ENCODE measurements at regions of chr18 and their contacts with region 1.

Region 1: GRCh38 chr18:74196220-74197119 is 48.1 kb downstream of the TIMM21 start:
- DNase-seq: peak; percentile 49
- H3K4me3 Mint-ChIP-seq: peak overlapping the region; percentile 66
- H3K27ac Mint-ChIP-seq: peak overlapping the region; percentile 67
- H3K4me1 Mint-ChIP-seq: peaks cover 24% of the 10 kb centered on the region
- H3K27me3 Mint-ChIP-seq: peaks cover 16% of the 10 kb centered on the region
- CTCF ChIP-seq: peak; percentile 88

Region 2: GRCh38 chr18:74171910-74172606 is 24.4 kb before region 1 on chr18:
- CTCF ChIA-PET with region 1: no interaction called
- intact Hi-C with region 1: no loop called
- DNase-seq: no peak
- H3K4me3 Mint-ChIP-seq: peak overlapping the region; percentile 70
- H3K27ac Mint-ChIP-seq: no peak overlapping the region
- H3K4me1 Mint-ChIP-seq: peaks cover 27% of the 10 kb centered on the region
- H3K27me3 Mint-ChIP-seq: peaks cover 82% of the 10 kb centered on the region
- CTCF ChIP-seq: no peak

Region 3: GRCh38 chr18:74234326-74235171 is 38.1 kb after region 1 on chr18:
- CTCF ChIA-PET with region 1: interaction called, 5 read pairs
- intact Hi-C with region 1: loop called (anchors 2 kb)
- DNase-seq: peak; percentile 62
- H3K4me3 Mint-ChIP-seq: peak overlapping the region; percentile 31
- H3K27ac Mint-ChIP-seq: peak overlapping the region; percentile 82
- H3K4me1 Mint-ChIP-seq: peaks cover 34% of the 10 kb centered on the region
- H3K27me3 Mint-ChIP-seq: no peaks in the 10 kb centered on the region
- CTCF ChIP-seq: no peak

Region 4: GRCh38 chr18:74291771-74292540 is 95.5 kb after region 1 on chr18 and contains the start of gene CYB5A:
- CTCF ChIA-PET with region 1: interaction called, 3 read pairs
- intact Hi-C with region 1: loop called (anchors 2 kb)
- DNase-seq: peak; percentile 98
- H3K4me3 Mint-ChIP-seq: peak within 1 kb of the TSS; percentile 100
- H3K27ac Mint-ChIP-seq: peak within 1 kb of the TSS; percentile 81
- H3K4me1 Mint-ChIP-seq: peaks cover 22% of the 10 kb centered on the region
- H3K27me3 Mint-ChIP-seq: no peaks in the 10 kb centered on the region
- CTCF ChIP-seq: no peak
- total RNA-seq, gene CYB5A: 143 and 169 TPM in 2 replicates

Region 5: DNA sequence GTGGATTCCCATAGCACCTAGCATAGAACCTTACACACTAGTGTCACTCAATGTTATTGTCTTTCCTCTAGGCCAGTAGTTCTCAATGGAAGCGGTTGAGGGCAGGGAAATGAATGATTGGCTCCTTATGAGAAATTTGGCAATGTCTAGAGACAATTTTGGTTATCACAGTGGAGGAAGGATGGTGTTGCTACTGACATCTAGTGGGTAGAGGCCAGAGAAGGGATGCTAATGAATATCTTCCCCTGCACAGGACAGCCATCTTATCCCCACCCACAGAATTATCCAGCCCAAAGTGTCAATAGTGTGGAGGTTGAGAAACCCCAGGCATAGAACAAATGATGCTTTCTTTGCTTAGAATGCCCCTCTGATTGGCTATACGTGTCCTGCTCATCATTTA is 134.9 kb after region 1 on chr18:
- CTCF ChIA-PET with region 1: no interaction called
- intact Hi-C with region 1: loop called (anchors 1 kb)
- DNase-seq: peak; percentile 24
- H3K4me3 Mint-ChIP-seq: no peak overlapping the region
- H3K27ac Mint-ChIP-seq: no peak overlapping the region
- H3K4me1 Mint-ChIP-seq: no peaks in the 10 kb centered on the region
- H3K27me3 Mint-ChIP-seq: no peaks in the 10 kb centered on the region
- CTCF ChIP-seq: peak; percentile 29

Region 6: DNA sequence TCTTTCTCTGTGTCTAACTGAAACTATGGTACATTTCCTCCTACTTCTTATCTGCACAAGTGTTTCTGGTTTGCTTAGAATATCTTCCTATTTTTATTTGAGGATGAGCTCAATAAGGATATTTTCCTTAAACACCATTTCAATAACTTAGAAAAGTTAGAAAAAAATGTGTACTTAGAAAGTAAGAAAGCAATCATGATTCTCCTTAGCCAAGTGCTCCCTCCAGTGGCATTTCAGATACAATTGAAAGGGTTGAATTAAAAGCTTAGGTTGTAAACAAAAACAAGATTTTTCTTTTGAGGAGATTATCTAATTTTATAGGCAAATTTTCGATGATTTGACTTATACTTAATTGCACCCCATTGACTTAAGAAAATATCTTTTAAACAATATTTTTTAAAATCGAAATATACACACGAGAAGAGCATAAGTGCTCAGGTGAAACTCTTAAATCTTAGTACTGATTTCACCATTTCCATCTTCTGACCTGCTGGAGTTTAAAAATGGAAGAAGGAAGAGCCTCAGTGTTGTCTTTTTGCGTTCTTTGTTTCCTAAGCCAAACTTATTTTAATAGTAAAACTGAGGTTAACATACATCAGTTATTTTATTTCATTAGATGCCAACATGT is 146.1 kb after region 1 on chr18:
- CTCF ChIA-PET with region 1: interaction called, 21 read pairs
- intact Hi-C with region 1: loop called (anchors 1 kb)
- DNase-seq: peak; percentile 46
- H3K4me3 Mint-ChIP-seq: no peak overlapping the region
- H3K27ac Mint-ChIP-seq: peak overlapping the region; percentile 7
- H3K4me1 Mint-ChIP-seq: no peaks in the 10 kb centered on the region
- H3K27me3 Mint-ChIP-seq: no peaks in the 10 kb centered on the region
- CTCF ChIP-seq: peak; percentile 48

Region 7: DNA sequence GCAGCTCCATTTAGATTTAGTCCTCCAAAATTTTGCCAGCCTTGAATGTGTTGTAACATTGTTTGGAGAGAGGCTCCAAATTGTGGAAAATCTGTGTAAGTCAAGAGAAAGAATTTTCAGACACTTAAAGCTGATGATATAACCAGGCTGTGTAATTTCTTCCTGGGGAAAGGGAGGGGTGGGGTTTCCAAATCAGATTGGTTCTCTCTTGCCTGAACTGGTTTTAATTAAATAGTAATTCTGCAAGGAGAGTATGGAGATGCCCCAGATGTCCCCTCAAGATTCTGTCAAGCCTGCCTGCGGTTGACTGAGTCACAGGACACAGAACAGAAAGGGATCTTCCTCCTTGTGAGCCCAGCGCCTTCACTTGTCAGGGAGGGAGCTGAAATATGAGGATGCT is 173.6 kb after region 1 on chr18:
- CTCF ChIA-PET with region 1: no interaction called
- intact Hi-C with region 1: no loop called
- DNase-seq: no peak
- H3K4me3 Mint-ChIP-seq: no peak overlapping the region
- H3K27ac Mint-ChIP-seq: no peak overlapping the region
- H3K4me1 Mint-ChIP-seq: peaks cover 9% of the 10 kb centered on the region
- H3K27me3 Mint-ChIP-seq: peaks cover 16% of the 10 kb centered on the region
- CTCF ChIP-seq: no peak

Region 8: GRCh38 chr18:74493689-74494088 is 297.2 kb after region 1 on chr18:
- CTCF ChIA-PET with region 1: no interaction called
- intact Hi-C with region 1: loop called (anchors 5 kb)
- DNase-seq: peak; percentile 61
- H3K4me3 Mint-ChIP-seq: no peak overlapping the region
- H3K27ac Mint-ChIP-seq: no peak overlapping the region
- H3K4me1 Mint-ChIP-seq: peaks cover 17% of the 10 kb centered on the region
- H3K27me3 Mint-ChIP-seq: peaks cover 11% of the 10 kb centered on the region
- CTCF ChIP-seq: peak; percentile 63

Region 9: DNA sequence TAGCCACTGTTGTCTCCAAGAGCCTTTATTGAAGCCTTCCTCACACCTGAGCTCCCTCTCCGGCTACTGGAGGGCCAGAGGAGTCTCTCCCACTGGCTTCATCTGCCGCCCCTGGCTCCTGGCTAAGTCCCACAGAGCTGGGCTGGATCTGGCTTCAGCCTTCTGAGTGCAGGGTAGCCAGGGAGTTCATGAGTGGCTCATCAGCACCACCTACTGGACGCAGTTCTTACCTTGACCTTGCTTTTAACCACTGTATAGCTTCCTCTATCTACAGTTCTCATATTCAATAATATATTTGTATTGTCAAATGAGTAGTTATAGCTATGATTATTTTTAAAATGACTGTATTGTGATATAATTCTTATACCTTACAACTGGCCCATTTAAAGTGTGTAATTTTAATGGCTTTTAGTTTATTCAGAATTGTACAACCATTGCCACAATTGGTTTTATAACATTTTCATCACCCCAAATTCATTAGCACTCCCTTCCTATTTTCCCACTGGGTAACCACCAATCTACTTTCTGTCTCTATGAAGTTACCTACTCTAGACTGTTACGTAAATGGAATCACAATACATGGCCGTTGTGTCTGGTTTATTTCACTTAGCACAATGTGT is 355.6 kb after region 1 on chr18:
- CTCF ChIA-PET with region 1: no interaction called
- intact Hi-C with region 1: loop called (anchors 1 kb)
- DNase-seq: peak; percentile 86
- H3K4me3 Mint-ChIP-seq: no peak overlapping the region
- H3K27ac Mint-ChIP-seq: no peak overlapping the region
- H3K4me1 Mint-ChIP-seq: peaks cover 15% of the 10 kb centered on the region
- H3K27me3 Mint-ChIP-seq: peaks cover 38% of the 10 kb centered on the region
- CTCF ChIP-seq: peak; percentile 78

Measured in Calu3 (cell line).